MCF 10A (cell line): ENCODE measurements at regions of chr3 and their contacts with region 1.

Region 1: DNA sequence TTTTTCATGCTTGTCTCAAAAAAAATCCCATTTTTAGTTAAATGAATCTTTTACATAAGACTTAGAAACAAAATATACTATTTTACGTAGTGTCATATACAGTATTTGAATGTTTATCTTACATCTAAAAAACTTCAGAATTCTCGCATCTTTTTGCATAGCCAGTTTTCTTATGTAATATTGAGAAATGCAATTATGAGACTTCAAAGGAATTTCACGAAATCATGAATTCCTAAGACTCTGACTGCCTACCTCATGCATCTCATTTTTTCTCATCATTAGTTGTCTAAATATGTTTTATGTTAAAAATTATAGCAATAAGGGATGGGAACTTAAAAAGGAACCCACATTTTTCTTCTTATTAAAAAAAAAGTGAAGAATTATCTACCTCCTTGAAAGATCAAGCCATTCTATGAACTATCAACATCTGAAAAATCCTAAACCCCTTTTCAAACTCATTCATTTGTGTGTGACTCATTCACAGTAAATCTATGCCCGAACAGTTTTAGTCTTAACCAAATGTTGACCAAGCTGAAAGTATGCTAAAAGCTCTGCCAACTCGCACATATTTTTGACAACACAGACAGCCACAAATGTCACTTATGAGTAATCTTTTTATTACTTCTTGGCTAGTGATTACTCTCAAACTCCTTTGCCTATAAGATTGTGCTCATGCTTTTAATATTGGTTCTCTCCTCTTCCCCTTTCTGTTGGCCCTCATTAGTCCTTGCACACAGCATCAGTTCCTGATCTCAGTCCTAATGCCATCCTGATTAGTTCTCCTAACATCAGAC is 115.9 kb downstream of the DCLK3 start:
- DNase-seq: peak; percentile 81
- H3K4me3 Mint-ChIP-seq: no peak overlapping the region
- H3K27ac Mint-ChIP-seq: peak overlapping the region; percentile 57
- H3K4me1 Mint-ChIP-seq: peaks cover 30% of the 10 kb centered on the region
- H3K27me3 Mint-ChIP-seq: no peaks in the 10 kb centered on the region
- CTCF ChIP-seq: no peak

Region 2: GRCh38 chr3:36488077-36488789 is 160.2 kb before region 1 on chr3:
- CTCF ChIA-PET with region 1: no interaction called
- POLR2A ChIA-PET with region 1: no interaction called
- intact Hi-C with region 1: no loop called
- DNase-seq: peak; percentile 6
- H3K4me3 Mint-ChIP-seq: no peak overlapping the region
- H3K27ac Mint-ChIP-seq: no peak overlapping the region
- H3K4me1 Mint-ChIP-seq: no peaks in the 10 kb centered on the region
- H3K27me3 Mint-ChIP-seq: no peaks in the 10 kb centered on the region
- CTCF ChIP-seq: no peak

Region 3: DNA sequence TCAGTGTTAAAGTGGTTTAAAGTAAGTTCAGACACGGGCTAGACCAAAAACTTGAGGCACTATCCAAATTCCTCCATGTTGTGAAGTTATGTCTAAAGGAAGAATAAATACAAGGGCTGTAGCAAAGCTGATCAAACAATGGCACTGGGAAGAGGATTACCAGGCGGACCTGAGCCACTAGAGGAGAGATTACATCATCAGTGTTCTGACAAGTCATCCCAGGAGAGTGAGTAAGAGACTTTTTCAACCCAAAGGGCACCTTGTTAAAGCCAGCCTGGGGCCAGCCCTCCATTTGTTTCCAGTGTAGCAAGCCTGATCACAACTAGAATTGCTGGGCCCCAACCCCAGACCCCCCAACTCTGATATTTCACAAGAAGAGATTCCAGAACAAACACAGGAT is 51.0 kb before region 1 on chr3:
- CTCF ChIA-PET with region 1: no interaction called
- POLR2A ChIA-PET with region 1: no interaction called
- intact Hi-C with region 1: loop called (anchors 5 kb)
- DNase-seq: peak; percentile 66
- H3K4me3 Mint-ChIP-seq: no peak overlapping the region
- H3K27ac Mint-ChIP-seq: no peak overlapping the region
- H3K4me1 Mint-ChIP-seq: peaks cover 8% of the 10 kb centered on the region
- H3K27me3 Mint-ChIP-seq: no peaks in the 10 kb centered on the region
- CTCF ChIP-seq: no peak

Region 4: DNA sequence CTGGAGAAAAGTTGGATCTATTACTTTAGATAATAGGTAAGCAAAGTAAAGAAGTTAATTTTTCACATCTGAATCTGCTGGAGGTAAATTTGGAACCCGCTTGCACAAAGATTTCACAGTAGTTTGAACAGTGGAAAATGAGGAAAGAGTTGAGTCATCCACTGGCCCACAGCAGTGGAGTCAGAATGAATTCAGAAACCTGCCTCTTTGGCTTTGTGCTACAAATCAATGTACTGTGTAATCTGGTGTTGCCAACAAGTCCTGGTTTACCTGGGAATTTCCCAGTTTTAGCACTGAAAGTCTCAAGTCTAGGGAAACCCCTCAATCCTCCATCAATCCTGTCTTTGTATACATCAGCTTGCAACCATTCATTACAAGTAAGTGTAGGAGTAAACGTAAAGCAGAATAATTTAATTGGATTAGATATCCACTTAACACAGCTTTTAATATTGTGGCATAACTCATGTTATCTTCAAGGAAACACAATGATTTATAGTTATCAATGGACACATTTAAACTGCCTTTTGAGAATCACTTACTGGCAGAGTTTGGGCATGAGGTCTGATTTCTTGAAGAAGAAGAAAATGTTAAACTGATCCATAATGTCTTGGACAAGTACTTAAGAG is 15.3 kb after region 1 on chr3:
- CTCF ChIA-PET with region 1: no interaction called
- POLR2A ChIA-PET with region 1: no interaction called
- intact Hi-C with region 1: loop called (anchors 2 kb)
- DNase-seq: peak; percentile 55
- H3K4me3 Mint-ChIP-seq: no peak overlapping the region
- H3K27ac Mint-ChIP-seq: no peak overlapping the region
- H3K4me1 Mint-ChIP-seq: peaks cover 7% of the 10 kb centered on the region
- H3K27me3 Mint-ChIP-seq: no peaks in the 10 kb centered on the region
- CTCF ChIP-seq: no peak

Region 5: GRCh38 chr3:36679384-36680200 is 31.2 kb after region 1 on chr3:
- CTCF ChIA-PET with region 1: interaction called, 3 read pairs
- POLR2A ChIA-PET with region 1: interaction called, 5 read pairs
- intact Hi-C with region 1: loop called (anchors 1 kb)
- DNase-seq: peak; percentile 80
- H3K4me3 Mint-ChIP-seq: peak overlapping the region; percentile 41
- H3K27ac Mint-ChIP-seq: peak overlapping the region; percentile 99
- H3K4me1 Mint-ChIP-seq: peaks cover 34% of the 10 kb centered on the region
- H3K27me3 Mint-ChIP-seq: no peaks in the 10 kb centered on the region
- CTCF ChIP-seq: no peak